ENCODE measurements at regions of chr2 and their contacts with region 1.

Region 1: GRCh38 chr2:97697252-97698235 is 15.8 kb upstream of the ZAP70 start:
- DNase-seq: peak; percentile 85
- H3K4me3 ChIP-seq: no peak overlapping the region
- H3K27ac ChIP-seq: no peak overlapping the region
- H3K4me1 ChIP-seq: no peaks in the 10 kb centered on the region
- H3K27me3 ChIP-seq: peaks cover 2 to 3% of the 10 kb centered on the region in 2 experiments
- CTCF ChIP-seq: peak; percentile 83 to 86
- POLR2A ChIP-seq: no peak

Region 2: DNA sequence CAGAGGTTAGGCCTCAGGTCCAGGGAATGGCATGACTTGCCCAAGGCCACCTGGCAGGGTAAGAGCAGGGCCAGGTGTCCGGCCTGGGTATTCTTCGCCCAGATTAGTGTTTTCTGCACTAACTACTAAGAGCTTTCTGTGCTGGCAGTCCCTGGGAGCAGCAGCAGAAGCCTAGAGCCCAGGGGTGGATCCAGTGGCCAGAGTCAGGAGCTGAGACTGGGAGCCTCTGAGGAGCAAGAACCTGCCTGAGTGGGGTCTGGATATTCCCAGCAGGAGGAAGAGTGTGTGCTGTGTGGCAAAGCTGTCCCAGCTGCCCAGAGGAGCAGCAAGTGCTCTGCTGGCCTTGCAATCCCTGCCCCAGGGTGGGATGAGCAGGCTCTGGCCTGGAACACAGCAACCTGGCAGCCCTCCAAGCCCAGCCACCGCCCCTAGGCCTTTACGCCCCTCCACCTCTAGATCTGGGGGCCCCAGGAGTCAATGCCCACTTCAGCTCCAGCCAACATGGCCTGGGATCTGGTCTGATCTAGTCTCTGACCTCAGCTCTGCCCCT is 1632.1 kb before region 1 on chr2:
- CTCF ChIA-PET with region 1: interaction called, 13 read pairs
- POLR2A ChIA-PET with region 1: no interaction called
- dilution Hi-C with region 1: no loop called
- intact Hi-C with region 1: no loop called
- DNase-seq: no peak
- H3K4me3 ChIP-seq: no peak overlapping the region
- H3K27ac ChIP-seq: no peak overlapping the region
- H3K4me1 ChIP-seq: no peaks in the 10 kb centered on the region
- H3K27me3 ChIP-seq: peaks cover 0 to 2% of the 10 kb centered on the region in 2 experiments
- CTCF ChIP-seq: no peak
- POLR2A ChIP-seq: no peak

Region 3: DNA sequence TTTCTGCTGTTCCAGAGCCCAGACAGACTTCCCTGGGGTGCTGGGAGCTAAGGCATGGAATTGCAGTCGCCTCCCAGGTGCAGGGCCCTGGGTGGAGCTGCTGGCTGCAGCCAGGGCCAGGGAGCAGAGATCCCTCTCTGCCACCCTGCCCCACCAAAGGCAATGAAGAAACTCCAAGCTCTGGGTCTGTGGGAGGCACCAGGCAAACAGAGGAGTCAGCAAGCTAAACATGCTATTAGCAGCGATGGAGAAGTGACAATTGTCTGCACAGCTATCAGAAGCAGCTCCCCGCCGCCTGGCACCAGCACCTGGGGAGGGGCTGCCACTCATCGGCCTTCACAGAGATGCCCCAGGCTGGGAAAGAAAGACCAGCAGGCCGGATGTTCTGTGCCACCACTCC is 79.6 kb before region 1 on chr2:
- CTCF ChIA-PET with region 1: no interaction called
- POLR2A ChIA-PET with region 1: no interaction called
- dilution Hi-C with region 1: no loop called
- intact Hi-C with region 1: no loop called
- DNase-seq: no peak
- H3K4me3 ChIP-seq: no peak overlapping the region
- H3K27ac ChIP-seq: no peak overlapping the region
- H3K4me1 ChIP-seq: no peaks in the 10 kb centered on the region
- H3K27me3 ChIP-seq: no peaks in the 10 kb centered on the region
- CTCF ChIP-seq: no peak
- POLR2A ChIP-seq: no peak

Region 4: GRCh38 chr2:97645695-97646629 is 51.6 kb before region 1 on chr2 and contains the start of gene COX5B:
- CTCF ChIA-PET with region 1: interaction called, 7 read pairs
- POLR2A ChIA-PET with region 1: interaction called, 5 read pairs
- dilution Hi-C with region 1: no loop called
- intact Hi-C with region 1: loop called (anchors 10 kb)
- DNase-seq: peak; percentile 98
- H3K4me3 ChIP-seq: peak within 1 kb of the TSS; percentile 68 to 81 (median 77)
- H3K27ac ChIP-seq: peak within 1 kb of the TSS; percentile 69
- H3K4me1 ChIP-seq: peaks cover 15% of the 10 kb centered on the region
- H3K27me3 ChIP-seq: no peaks in the 10 kb centered on the region
- CTCF ChIP-seq: no peak
- POLR2A ChIP-seq: peak; percentile 91
- total RNA-seq, gene COX5B: 159 and 167 TPM in 2 replicates

Region 5: DNA sequence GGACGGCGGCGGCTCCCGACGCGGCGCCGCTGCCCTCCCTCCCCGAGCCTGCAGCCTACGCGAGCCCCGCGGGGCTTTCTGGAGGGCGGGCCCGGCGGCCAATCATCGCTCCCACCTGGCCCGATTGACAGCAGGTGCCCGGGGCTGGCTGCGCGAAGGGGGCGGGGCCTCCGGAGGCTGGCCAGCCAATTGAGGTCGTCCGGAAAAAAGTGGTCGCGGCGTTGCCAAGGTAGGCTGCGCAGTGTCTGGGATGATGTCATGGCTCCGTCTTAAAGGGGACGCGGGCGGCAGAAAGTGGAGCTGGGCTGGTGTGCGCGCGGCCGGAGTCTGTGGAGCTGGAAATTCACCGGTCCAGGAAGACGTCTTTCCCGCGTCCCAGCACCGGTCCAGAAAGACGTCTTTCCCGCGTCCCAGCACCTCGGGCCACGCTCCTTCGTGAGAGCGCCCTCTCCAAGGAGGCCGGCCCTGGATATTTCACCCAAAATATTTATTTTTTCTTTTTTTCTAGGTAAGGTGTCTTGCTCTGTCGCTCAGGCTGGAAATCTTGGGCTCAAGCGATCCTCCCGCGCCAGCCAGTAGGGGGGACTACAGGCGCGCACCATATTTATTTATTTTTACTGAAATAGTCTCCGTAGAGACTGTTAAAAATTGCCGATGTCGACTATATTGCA is 33.4 kb before region 1 on chr2 and contains the start of gene ACTR1B:
- CTCF ChIA-PET with region 1: interaction called, 126 read pairs
- POLR2A ChIA-PET with region 1: interaction called, 3 read pairs
- dilution Hi-C with region 1: no loop called
- intact Hi-C with region 1: loop called (anchors 1 kb)
- DNase-seq: peak; percentile 99
- H3K4me3 ChIP-seq: peak within 1 kb of the TSS; percentile 65 to 83 (median 78)
- H3K27ac ChIP-seq: peak within 1 kb of the TSS; percentile 85
- H3K4me1 ChIP-seq: peaks cover 18% of the 10 kb centered on the region
- H3K27me3 ChIP-seq: no peaks in the 10 kb centered on the region
- CTCF ChIP-seq: peak; percentile 55 to 56
- POLR2A ChIP-seq: peak; percentile 38
- total RNA-seq, gene ACTR1B: 49.8 and 50.2 TPM in 2 replicates

Region 6: GRCh38 chr2:97713296-97714083 is 15.9 kb after region 1 on chr2 and contains the start of gene ZAP70:
- CTCF ChIA-PET with region 1: interaction called, 68 read pairs
- POLR2A ChIA-PET with region 1: interaction called, 4 read pairs
- dilution Hi-C with region 1: no loop called
- intact Hi-C with region 1: no loop called
- DNase-seq: no peak
- H3K4me3 ChIP-seq: no peak within 1 kb of the TSS
- H3K27ac ChIP-seq: no peak within 1 kb of the TSS
- H3K4me1 ChIP-seq: no peaks in the 10 kb centered on the region
- H3K27me3 ChIP-seq: no peaks in the 10 kb centered on the region
- CTCF ChIP-seq: no peak
- POLR2A ChIP-seq: no peak
- total RNA-seq, gene ZAP70: not detected in 2 replicates

Region 7: DNA sequence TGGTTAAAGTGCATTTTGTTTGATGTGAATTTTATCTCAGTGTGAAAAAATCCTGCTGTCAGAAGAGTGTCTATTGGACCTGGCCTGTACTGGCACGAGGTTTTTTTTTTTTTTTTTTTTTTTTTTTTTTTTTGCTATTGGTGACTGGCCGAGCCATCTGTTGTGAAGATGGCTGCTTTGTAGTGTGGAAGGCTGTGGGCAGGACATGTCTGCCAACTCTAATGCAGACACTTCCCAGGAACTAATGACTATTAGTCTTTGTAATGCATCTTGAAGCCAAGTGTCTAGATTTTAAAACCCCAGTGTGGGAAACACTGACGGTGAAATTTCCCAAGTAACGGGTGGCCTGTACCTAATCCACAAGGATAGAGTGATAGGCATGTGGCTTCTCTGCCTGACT is 50.2 kb after region 1 on chr2:
- CTCF ChIA-PET with region 1: interaction called, 8 read pairs
- POLR2A ChIA-PET with region 1: no interaction called
- dilution Hi-C with region 1: no loop called
- intact Hi-C with region 1: loop called (anchors 2 kb)
- DNase-seq: no peak
- H3K4me3 ChIP-seq: no peak overlapping the region
- H3K27ac ChIP-seq: no peak overlapping the region
- H3K4me1 ChIP-seq: no peaks in the 10 kb centered on the region
- H3K27me3 ChIP-seq: no peaks in the 10 kb centered on the region
- CTCF ChIP-seq: no peak
- POLR2A ChIP-seq: no peak

Measured in endothelial cell of umbilical vein (primary cell).